ENCODE measurements at regions of chr3 and their contacts with region 1.

Region 1: DNA sequence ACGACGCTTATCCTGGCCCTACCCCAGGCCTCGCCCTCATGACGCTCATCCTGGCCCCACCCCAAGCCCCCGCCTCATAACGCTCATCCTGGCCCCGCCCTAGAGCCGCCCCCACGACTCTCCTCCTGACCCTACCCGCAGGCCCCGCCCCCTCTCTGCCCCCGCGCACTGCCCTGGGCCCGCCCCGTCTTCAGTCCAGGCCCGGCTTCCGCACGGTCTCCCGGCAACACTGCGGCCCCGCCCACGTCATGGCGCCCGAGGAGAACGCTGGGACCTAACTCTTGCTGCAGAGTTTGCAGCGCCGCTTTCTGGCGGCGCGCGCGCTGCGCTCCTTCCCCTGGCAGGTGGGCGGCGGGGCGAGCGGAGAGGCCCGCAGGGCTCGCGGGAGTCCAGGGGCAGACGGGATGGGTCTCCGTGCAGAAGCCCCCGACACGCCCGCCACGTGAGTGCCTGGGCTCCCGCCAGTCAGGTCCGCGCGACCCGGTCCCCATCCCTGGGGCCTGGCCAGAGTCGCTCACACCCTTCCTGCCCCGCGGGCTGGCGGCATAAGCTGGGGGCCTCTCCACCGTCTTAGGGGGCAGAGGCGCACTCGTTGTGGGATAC is 52.5 kb upstream of the ROPN1B start:
- DNase-seq: peak; percentile 94
- ATAC-seq: peak; percentile 90
- H3K4me3 ChIP-seq: peak overlapping the region; percentile 21 to 77 (median 74)
- H3K4me3 Mint-ChIP-seq: peak overlapping the region; percentile 93
- H3K27ac ChIP-seq: peak overlapping the region; percentile 78 to 85
- H3K27ac Mint-ChIP-seq: peak overlapping the region; percentile 96
- H3K4me1 ChIP-seq: peaks cover 0 to 15% of the 10 kb centered on the region in 2 donors
- H3K4me1 Mint-ChIP-seq: peaks cover 11% of the 10 kb centered on the region
- H3K27me3 ChIP-seq: no peaks in the 10 kb centered on the region
- H3K27me3 Mint-ChIP-seq: no peaks in the 10 kb centered on the region
- CTCF ChIP-seq: no peak

Region 2: DNA sequence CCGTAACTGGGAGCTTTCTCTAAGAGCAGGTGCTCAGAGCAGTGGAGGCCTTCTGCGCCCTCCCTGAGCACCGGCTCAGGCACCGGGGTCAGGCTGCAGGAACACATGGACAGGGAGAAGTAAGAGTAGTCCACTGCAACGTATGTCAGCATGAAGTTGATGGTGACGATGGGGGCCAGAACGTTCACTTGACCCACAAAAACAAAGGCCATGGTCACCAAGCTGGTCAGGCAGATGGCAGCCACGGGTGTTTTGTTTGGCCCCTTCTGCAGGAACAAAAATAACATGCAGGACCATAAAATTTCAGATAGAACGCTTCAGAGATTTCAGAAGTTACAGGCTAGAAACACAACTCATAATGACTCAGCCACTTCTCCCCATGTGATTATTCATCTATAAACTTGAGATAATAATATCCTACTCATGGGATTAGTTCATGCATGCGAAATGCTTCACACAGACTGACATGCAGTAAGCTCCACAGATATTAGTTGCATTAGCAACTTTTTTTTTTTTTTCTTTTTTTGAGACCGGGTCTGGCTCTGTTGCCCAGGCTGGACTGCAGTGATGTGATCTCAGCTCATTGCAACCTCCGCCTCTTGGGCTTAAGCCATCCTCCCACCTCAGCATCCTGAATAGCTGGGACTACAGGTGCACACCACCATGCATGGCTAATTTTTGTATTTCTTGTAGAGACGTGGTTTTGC is 808.5 kb before region 1 on chr3:
- CTCF ChIA-PET with region 1: no interaction called
- POLR2A ChIA-PET with region 1: no interaction called
- intact Hi-C with region 1: no loop called
- DNase-seq: no peak
- ATAC-seq: peak; percentile 31
- H3K4me3 ChIP-seq: no peak overlapping the region
- H3K4me3 Mint-ChIP-seq: peak overlapping the region; percentile 9
- H3K27ac ChIP-seq: no peak overlapping the region
- H3K27ac Mint-ChIP-seq: no peak overlapping the region
- H3K4me1 ChIP-seq: peaks cover 8 to 32% of the 10 kb centered on the region in 2 donors
- H3K4me1 Mint-ChIP-seq: peaks cover 23% of the 10 kb centered on the region
- H3K27me3 ChIP-seq: peaks cover 0 to 3% (median 0%) of the 10 kb centered on the region in 4 experiments
- H3K27me3 Mint-ChIP-seq: no peaks in the 10 kb centered on the region
- CTCF ChIP-seq: no peak

Region 3: GRCh38 chr3:125662675-125663074 is 253.8 kb before region 1 on chr3:
- CTCF ChIA-PET with region 1: no interaction called
- POLR2A ChIA-PET with region 1: no interaction called
- intact Hi-C with region 1: no loop called
- DNase-seq: no peak
- ATAC-seq: no peak
- H3K4me3 ChIP-seq: no peak overlapping the region
- H3K4me3 Mint-ChIP-seq: no peak overlapping the region
- H3K27ac ChIP-seq: no peak overlapping the region
- H3K27ac Mint-ChIP-seq: no peak overlapping the region
- H3K4me1 ChIP-seq: no peaks in the 10 kb centered on the region
- H3K4me1 Mint-ChIP-seq: no peaks in the 10 kb centered on the region
- H3K27me3 ChIP-seq: no peaks in the 10 kb centered on the region
- H3K27me3 Mint-ChIP-seq: no peaks in the 10 kb centered on the region
- CTCF ChIP-seq: no peak

Region 4: DNA sequence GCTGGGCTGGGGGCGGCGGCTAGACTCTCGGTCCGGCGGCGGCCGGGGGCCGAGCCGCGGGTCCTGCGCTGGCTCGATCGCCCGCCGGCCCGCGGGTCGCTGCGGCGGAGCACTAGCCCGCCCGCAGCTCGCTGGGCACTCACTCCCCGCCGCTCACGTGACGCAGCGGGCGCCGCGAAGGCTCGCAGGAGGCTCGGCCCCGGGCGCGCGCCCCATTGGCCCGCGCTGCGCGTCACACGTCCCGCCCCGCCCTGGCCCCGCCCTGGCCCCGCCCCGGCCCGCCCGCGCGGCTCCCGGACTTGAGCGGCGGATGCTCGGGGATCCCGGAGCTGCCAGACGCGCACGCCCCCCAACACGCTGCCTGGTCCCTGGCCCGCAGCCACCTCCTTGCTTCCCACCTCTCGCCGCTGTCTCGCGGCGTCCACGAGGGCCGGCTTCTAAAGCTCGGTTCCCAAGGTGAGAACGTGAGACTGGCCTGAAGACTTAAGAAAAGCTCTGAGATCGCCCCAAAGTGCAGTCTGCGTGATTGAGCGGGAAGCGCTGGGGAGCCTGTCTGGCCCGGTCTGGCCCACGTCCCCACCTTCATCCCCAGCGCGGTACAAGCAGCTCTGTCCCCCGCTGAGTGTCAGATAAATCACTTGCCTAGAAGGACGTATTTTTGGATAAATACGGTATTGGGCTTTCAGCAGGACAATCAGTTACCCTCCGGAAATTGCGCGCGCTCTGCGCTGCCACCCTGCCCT is 441.0 kb after region 1 on chr3 and contains the start of gene KLF15:
- CTCF ChIA-PET with region 1: no interaction called
- POLR2A ChIA-PET with region 1: no interaction called
- intact Hi-C with region 1: loop called (anchors 1 kb)
- DNase-seq: peak; percentile 85
- ATAC-seq: peak; percentile 93
- H3K4me3 ChIP-seq: peak within 1 kb of the TSS; percentile 12 to 84 (median 59)
- H3K4me3 Mint-ChIP-seq: peak within 1 kb of the TSS; percentile 95
- H3K27ac ChIP-seq: no peak within 1 kb of the TSS
- H3K27ac Mint-ChIP-seq: peak within 1 kb of the TSS; percentile 81
- H3K4me1 ChIP-seq: peaks cover 20 to 21% of the 10 kb centered on the region in 2 donors
- H3K4me1 Mint-ChIP-seq: peaks cover 16% of the 10 kb centered on the region
- H3K27me3 ChIP-seq: peaks cover 0 to 54% (median 22%) of the 10 kb centered on the region in 4 experiments
- H3K27me3 Mint-ChIP-seq: peaks cover 50% of the 10 kb centered on the region
- CTCF ChIP-seq: no peak
- total RNA-seq, gene KLF15: 0.83 and 2.2 TPM in 2 replicates

Region 5: GRCh38 chr3:126389112-126389793 is 472.8 kb after region 1 on chr3:
- CTCF ChIA-PET with region 1: no interaction called
- POLR2A ChIA-PET with region 1: no interaction called
- intact Hi-C with region 1: loop called (anchors 5 kb)
- DNase-seq: peak; percentile 78
- ATAC-seq: peak; percentile 90
- H3K4me3 ChIP-seq: peak overlapping the region in 4 of 5 experiments; percentile 11 to 33 (median 26)
- H3K4me3 Mint-ChIP-seq: peak overlapping the region; percentile 80
- H3K27ac ChIP-seq: no peak overlapping the region
- H3K27ac Mint-ChIP-seq: no peak overlapping the region
- H3K4me1 ChIP-seq: peaks cover 8 to 17% of the 10 kb centered on the region in 2 donors
- H3K4me1 Mint-ChIP-seq: peaks cover 23% of the 10 kb centered on the region
- H3K27me3 ChIP-seq: peaks cover 0 to 26% (median 7%) of the 10 kb centered on the region in 4 experiments
- H3K27me3 Mint-ChIP-seq: peaks cover 59% of the 10 kb centered on the region
- CTCF ChIP-seq: peak; percentile 64

Region 6: GRCh38 chr3:126703512-126704462 is 787.3 kb after region 1 on chr3 and contains the start of gene CHCHD6:
- CTCF ChIA-PET with region 1: no interaction called
- POLR2A ChIA-PET with region 1: no interaction called
- intact Hi-C with region 1: loop called (anchors 5 kb)
- DNase-seq: peak; percentile 97
- ATAC-seq: peak; percentile 96
- H3K4me3 ChIP-seq: peak within 1 kb of the TSS in 4 of 5 experiments; percentile 61 to 79 (median 75)
- H3K4me3 Mint-ChIP-seq: peak within 1 kb of the TSS; percentile 92
- H3K27ac ChIP-seq: peak within 1 kb of the TSS in 1 of 2 donors; percentile 11
- H3K27ac Mint-ChIP-seq: peak within 1 kb of the TSS; percentile 78
- H3K4me1 ChIP-seq: peaks cover 11 to 15% of the 10 kb centered on the region in 2 donors
- H3K4me1 Mint-ChIP-seq: peaks cover 17% of the 10 kb centered on the region
- H3K27me3 ChIP-seq: peaks cover 0 to 9% (median 4%) of the 10 kb centered on the region in 4 experiments
- H3K27me3 Mint-ChIP-seq: peaks cover 36% of the 10 kb centered on the region
- CTCF ChIP-seq: no peak
- total RNA-seq, gene CHCHD6: 13.5 TPM in 2 replicates